Activated B cell treated with CpG ODN at 0.5 μM for 24 hours (primary cell): ENCODE measurements at regions of chr2 and their contacts with region 1.

Region 1: DNA sequence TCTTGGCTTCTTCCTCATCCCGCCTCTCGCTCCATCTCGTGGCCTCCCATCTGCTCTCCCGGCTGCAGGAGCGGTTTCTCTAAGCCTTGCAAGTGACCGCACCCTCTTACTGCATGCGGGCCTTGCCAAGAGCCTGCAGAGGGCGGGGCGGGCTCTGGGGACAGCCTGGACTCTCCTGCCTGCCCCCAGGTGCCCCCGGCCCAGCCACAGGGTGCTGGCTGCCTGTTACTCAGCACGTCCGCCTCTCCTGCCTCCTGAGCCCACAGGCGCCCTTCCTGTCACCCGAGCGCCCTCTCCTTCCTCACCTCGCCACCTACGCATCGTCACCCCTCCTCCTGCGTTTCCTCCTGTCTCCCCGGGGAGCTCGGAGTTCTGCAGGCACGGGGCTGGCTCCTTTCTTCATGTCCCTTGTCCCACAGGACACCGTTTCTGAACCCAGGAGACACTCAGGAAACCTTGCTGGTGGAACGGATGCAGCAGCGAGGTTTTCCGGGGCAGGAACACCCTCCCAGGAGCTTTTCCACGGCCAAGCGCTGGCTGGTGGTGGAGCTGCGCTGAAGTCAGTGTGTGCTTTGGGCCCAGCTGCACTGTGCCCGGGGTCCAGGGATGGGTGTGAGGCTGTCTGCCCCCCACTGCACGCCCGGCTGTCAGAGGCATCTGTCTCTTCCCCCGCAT is 28.5 kb downstream of the HPCAL1 start:
- DNase-seq: peak; percentile 31
- ATAC-seq: peak; percentile 49
- H3K4me3 Mint-ChIP-seq: peak overlapping the region; percentile 79
- H3K27ac Mint-ChIP-seq: peak overlapping the region; percentile 65
- H3K4me1 Mint-ChIP-seq: peaks cover 70% of the 10 kb centered on the region
- H3K27me3 Mint-ChIP-seq: no peaks in the 10 kb centered on the region
- CTCF ChIP-seq: no peak

Region 2: DNA sequence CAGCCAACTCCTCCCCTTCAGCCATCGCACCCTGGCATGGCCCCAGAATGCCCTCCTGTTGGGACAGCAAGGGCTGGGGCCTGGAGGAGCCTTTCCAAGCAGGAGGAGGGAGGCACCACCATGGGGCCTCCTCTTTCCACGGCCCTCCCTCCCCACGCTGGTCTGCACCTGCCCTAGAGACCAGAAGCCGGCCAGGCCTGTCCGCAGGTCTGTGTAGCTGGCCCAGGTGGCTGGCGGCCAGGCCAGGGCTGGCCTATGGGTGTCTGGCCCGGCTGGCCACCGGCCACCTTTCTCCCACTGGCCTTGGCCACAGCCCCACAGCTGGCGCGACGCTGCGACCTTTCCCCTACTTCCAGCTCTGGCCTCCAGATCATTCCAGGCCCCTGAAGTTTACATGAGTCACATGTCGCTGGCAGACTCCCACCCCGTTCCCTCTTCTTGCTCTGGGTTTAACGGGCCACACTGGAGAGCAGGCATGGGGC is 321.3 kb before region 1 on chr2:
- CTCF ChIA-PET with region 1: no interaction called
- POLR2A ChIA-PET with region 1: no interaction called
- intact Hi-C with region 1: no loop called
- DNase-seq: no peak
- ATAC-seq: no peak
- H3K4me3 Mint-ChIP-seq: no peak overlapping the region
- H3K27ac Mint-ChIP-seq: no peak overlapping the region
- H3K4me1 Mint-ChIP-seq: no peaks in the 10 kb centered on the region
- H3K27me3 Mint-ChIP-seq: no peaks in the 10 kb centered on the region
- CTCF ChIP-seq: no peak

Region 3: GRCh38 chr2:10375570-10376281 is 44.6 kb after region 1 on chr2:
- CTCF ChIA-PET with region 1: no interaction called
- POLR2A ChIA-PET with region 1: interaction called, 4 read pairs
- intact Hi-C with region 1: loop called (anchors 2 kb)
- DNase-seq: no peak
- ATAC-seq: peak; percentile 74
- H3K4me3 Mint-ChIP-seq: peak overlapping the region; percentile 59
- H3K27ac Mint-ChIP-seq: peak overlapping the region; percentile 86
- H3K4me1 Mint-ChIP-seq: peaks cover 78% of the 10 kb centered on the region
- H3K27me3 Mint-ChIP-seq: no peaks in the 10 kb centered on the region
- CTCF ChIP-seq: no peak